ENCODE measurements at regions of chr17 and their contacts with region 1.

Region 1: DNA sequence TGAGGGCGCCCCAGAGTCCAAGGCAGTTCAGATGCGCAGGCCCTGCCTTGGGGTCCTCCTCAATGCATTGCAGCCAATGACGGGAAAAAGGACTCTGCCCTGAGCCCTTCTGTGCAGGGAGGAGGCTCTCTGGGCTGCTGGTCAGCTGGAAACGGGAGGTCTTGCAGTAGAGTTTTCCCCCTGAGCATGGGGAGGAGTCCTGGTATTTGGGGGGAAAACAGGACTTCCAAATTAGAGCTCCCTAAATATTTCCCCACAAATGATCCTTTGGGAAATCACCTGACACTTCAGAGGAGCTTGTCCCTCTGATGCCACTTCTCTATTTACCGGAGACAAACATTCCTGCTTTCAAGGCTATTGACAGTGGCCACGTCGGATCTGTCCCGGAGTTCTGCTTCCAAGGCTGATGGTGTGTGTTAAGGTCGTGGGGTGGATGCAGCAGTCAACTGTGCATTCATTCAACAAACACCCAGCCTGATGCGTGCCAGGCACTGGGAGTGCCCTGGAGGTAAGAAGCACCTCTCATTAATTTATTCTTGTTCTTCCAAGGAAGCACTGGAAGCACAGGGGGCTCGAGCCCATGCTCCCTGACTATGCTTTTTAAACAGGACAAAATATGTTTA is 73.0 kb upstream of the DNAH17 start:
- DNase-seq: peak; percentile 97
- ATAC-seq: peak; percentile 95
- H3K4me3 ChIP-seq: peak overlapping the region in 1 of 3 experiments; percentile 42; a peak in 2 of 6 replicates
- H3K27ac ChIP-seq: peak overlapping the region; percentile 76
- H3K4me1 ChIP-seq: peaks cover 82% of the 10 kb centered on the region
- H3K27me3 ChIP-seq: no peaks in the 10 kb centered on the region
- CTCF ChIP-seq: peak; percentile 47
- EP300 ChIP-seq: peak; percentile 97 to 98
- POLR2A ChIP-seq: no peak
- RAD21 ChIP-seq: peak; percentile 47; the same call in 1 of the 2 replicates

Region 2: DNA sequence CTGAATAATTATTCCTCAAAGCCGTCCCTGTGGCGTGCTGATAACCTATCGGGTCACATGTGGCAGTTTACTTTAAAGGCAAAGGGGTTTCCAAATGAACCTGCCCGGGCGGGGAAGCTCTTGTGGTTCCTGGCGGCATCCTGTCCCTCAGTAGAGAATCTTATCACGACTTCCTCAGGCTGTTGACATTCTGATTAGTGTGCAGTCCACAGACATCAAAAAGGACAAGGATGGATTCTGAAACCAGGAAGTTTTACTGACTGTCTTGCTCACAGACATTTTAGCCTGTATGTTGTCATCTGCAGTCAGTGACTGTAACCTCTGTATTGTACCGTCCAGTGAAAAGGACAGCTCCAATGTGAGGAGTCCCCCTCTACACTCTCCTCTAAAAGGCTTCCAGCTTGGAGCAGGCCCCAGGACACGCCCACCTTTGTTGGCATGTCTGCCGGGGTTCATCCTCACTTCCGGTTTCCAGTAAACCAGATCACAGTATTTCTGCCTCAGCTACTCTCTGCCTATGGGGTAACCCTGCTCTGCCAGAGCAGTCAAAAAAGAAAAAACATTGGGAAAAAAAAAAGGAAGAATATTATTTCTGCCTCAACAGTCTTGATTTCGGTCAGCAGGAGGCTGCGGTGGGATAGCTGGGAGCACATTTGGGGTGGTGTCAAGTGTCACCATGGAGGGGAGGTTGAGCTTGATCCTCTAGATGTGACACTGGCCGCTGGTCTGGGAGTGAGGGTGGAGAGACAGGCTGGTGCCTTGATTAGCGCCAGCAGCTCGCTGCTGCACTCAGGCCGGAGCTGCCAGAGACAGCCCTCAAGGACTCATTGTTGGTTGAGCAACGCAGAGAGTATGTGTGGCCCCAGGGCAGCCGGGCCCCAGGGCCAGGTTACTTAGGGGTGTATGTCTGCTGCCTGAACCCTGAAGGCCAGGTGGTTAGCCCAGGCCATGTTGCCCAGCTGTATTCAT is 16.0 kb after region 1 on chr17:
- CTCF ChIA-PET with region 1: no interaction called
- POLR2A ChIA-PET with region 1: interaction called, 17 read pairs
- in situ Hi-C with region 1: no loop called
- intact Hi-C with region 1: no loop called
- DNase-seq: peak; percentile 88
- ATAC-seq: peak; percentile 78
- H3K4me3 ChIP-seq: peak overlapping the region in 1 of 3 experiments; percentile 12; a peak in 1 of 6 replicates
- H3K27ac ChIP-seq: peak overlapping the region; percentile 41
- H3K4me1 ChIP-seq: peaks cover 52% of the 10 kb centered on the region
- H3K27me3 ChIP-seq: no peaks in the 10 kb centered on the region
- CTCF ChIP-seq: no peak; the same call in 1 of the 2 replicates
- EP300 ChIP-seq: peak in 1 of 2 experiments; percentile 78; a peak in 3 of 4 replicates
- POLR2A ChIP-seq: peak in 1 of 2 experiments; percentile 43; a peak in 2 of 4 replicates
- RAD21 ChIP-seq: no peak

Region 3: DNA sequence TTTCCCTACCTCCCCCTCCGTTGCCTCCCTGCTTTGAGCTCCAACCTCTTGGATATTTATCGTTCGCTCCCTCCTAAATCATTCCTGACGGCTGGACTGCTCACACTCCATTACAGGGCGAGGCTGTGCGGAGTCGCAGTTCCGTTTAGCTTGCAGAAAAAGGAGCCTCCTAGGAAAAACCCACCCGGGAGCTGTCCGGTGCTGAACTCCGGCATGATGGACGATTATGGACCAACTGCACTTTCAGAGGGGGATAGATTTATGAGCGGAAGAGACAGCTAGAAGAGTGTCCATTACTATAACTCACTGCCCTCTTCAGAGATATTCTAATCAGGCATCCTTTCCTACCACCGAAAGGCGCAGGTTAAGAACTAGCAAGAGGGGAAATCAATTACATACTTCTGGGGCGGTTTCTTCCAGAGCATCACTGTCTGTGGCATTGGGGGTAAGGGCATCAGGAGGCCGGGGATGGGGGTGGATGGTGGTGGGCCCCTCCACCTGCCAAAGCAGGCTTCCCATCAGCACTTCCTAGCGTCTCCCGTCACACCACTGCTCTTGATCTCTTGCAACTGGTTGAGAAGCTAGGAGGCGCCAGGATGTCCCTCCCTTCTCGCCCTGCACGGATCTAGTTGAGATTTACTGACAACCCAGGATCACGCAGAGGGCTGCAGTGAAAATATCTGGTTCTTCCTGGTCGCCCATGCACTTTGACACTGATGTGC is 675.7 kb after region 1 on chr17:
- CTCF ChIA-PET with region 1: no interaction called
- POLR2A ChIA-PET with region 1: no interaction called
- in situ Hi-C with region 1: no loop called
- intact Hi-C with region 1: no loop called
- DNase-seq: no peak
- ATAC-seq: no peak
- H3K4me3 ChIP-seq: no peak overlapping the region
- H3K27ac ChIP-seq: no peak overlapping the region
- H3K4me1 ChIP-seq: no peaks in the 10 kb centered on the region
- H3K27me3 ChIP-seq: peaks cover 6 to 68% of the 10 kb centered on the region in 2 experiments; a peak in 4 of 5 replicates
- CTCF ChIP-seq: no peak
- EP300 ChIP-seq: no peak
- POLR2A ChIP-seq: no peak
- RAD21 ChIP-seq: no peak

Measured in HepG2 (cell line).